PC-3 (cell line): ENCODE measurements at regions of chr3 and their contacts with region 1.

Region 1: GRCh38 chr3:196016485-196016884 is 65.4 kb downstream of the TFRC start:
- DNase-seq: peak; percentile 83
- ATAC-seq: peak; percentile 72
- H3K4me3 ChIP-seq: no peak overlapping the region
- H3K27ac ChIP-seq: no peak overlapping the region
- H3K4me1 ChIP-seq: peaks cover 38% of the 10 kb centered on the region
- H3K27me3 ChIP-seq: no peaks in the 10 kb centered on the region
- CTCF ChIP-seq: no peak

Region 2: GRCh38 chr3:195458316-195458717 is 558.2 kb before region 1 on chr3:
- CTCF ChIA-PET with region 1: no interaction called
- POLR2A ChIA-PET with region 1: no interaction called
- intact Hi-C with region 1: no loop called
- DNase-seq: no peak
- ATAC-seq: no peak
- H3K4me3 ChIP-seq: no peak overlapping the region
- H3K27ac ChIP-seq: no peak overlapping the region
- H3K4me1 ChIP-seq: 0 out of 2 replicates have a peak, but pooled peaks cover 5% of the 10 kb centered on the region
- H3K27me3 ChIP-seq: no peaks in the 10 kb centered on the region
- CTCF ChIP-seq: no peak

Region 3: GRCh38 chr3:196047391-196048030 is 31.0 kb after region 1 on chr3:
- CTCF ChIA-PET with region 1: interaction called, 10 read pairs
- POLR2A ChIA-PET with region 1: no interaction called
- intact Hi-C with region 1: no loop called
- DNase-seq: no peak
- ATAC-seq: no peak
- H3K4me3 ChIP-seq: no peak overlapping the region
- H3K27ac ChIP-seq: no peak overlapping the region
- H3K4me1 ChIP-seq: no peaks in the 10 kb centered on the region
- H3K27me3 ChIP-seq: no peaks in the 10 kb centered on the region
- CTCF ChIP-seq: no peak

Region 4: GRCh38 chr3:196063456-196063855 is 47.0 kb after region 1 on chr3:
- CTCF ChIA-PET with region 1: no interaction called
- POLR2A ChIA-PET with region 1: no interaction called
- intact Hi-C with region 1: no loop called
- DNase-seq: no peak
- ATAC-seq: no peak
- H3K4me3 ChIP-seq: no peak overlapping the region
- H3K27ac ChIP-seq: no peak overlapping the region
- H3K4me1 ChIP-seq: no peaks in the 10 kb centered on the region
- H3K27me3 ChIP-seq: no peaks in the 10 kb centered on the region
- CTCF ChIP-seq: no peak

Region 5: GRCh38 chr3:196198771-196199753 is 182.6 kb after region 1 on chr3:
- CTCF ChIA-PET with region 1: no interaction called
- POLR2A ChIA-PET with region 1: no interaction called
- intact Hi-C with region 1: loop called (anchors 5 kb)
- DNase-seq: no peak
- ATAC-seq: no peak
- H3K4me3 ChIP-seq: no peak overlapping the region
- H3K27ac ChIP-seq: no peak overlapping the region
- H3K4me1 ChIP-seq: no peaks in the 10 kb centered on the region
- H3K27me3 ChIP-seq: no peaks in the 10 kb centered on the region
- CTCF ChIP-seq: peak; percentile 44

Region 6: DNA sequence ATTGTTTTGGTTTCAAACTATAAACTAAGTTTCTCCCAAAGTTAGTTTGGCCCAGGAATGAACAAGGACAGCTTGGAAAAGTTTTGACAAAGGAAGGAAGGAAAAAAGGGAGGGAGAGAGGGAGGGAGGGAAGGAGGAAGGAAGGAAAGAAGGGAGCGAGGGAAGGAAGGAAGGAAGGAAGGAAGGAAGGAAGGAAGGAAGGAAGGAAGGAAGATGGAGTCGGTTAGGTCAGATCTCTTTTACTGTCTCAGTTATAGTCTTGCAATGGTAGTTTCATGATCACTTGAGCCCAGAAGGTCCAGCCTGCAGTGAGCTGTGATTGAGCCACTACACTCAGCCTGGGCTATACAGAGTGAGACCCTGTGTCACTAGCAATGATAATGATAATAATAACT is 428.0 kb after region 1 on chr3:
- CTCF ChIA-PET with region 1: no interaction called
- POLR2A ChIA-PET with region 1: no interaction called
- intact Hi-C with region 1: no loop called
- DNase-seq: no peak
- ATAC-seq: no peak; the same call in 1 of the 2 replicates
- H3K4me3 ChIP-seq: no peak overlapping the region
- H3K27ac ChIP-seq: no peak overlapping the region
- H3K4me1 ChIP-seq: 0 out of 2 replicates have a peak, but pooled peaks cover 5% of the 10 kb centered on the region
- H3K27me3 ChIP-seq: no peaks in the 10 kb centered on the region
- CTCF ChIP-seq: no peak